OCI-LY7 (cell line): ENCODE measurements at regions of chr15 and their contacts with region 1.

Region 1: GRCh38 chr15:41660235-41661077 is at the start of gene MGA:
- DNase-seq: peak; percentile 98
- H3K4me3 ChIP-seq: peak within 1 kb of the TSS; percentile 78
- H3K27ac ChIP-seq: peak within 1 kb of the TSS; percentile 95
- H3K4me1 ChIP-seq: peaks cover 44% of the 10 kb centered on the region
- CTCF ChIP-seq: no peak
- total RNA-seq, gene MGA: 48.8 and 60.1 TPM in 2 replicates

Region 2: GRCh38 chr15:41530363-41530956 is 130.0 kb before region 1 on chr15:
- CTCF ChIA-PET with region 1: no interaction called
- POLR2A ChIA-PET with region 1: no interaction called
- intact Hi-C with region 1: no loop called
- DNase-seq: peak; percentile 32
- H3K4me3 ChIP-seq: no peak overlapping the region
- H3K27ac ChIP-seq: peak overlapping the region; percentile 21
- H3K4me1 ChIP-seq: peaks cover 11% of the 10 kb centered on the region
- CTCF ChIP-seq: no peak

Region 3: DNA sequence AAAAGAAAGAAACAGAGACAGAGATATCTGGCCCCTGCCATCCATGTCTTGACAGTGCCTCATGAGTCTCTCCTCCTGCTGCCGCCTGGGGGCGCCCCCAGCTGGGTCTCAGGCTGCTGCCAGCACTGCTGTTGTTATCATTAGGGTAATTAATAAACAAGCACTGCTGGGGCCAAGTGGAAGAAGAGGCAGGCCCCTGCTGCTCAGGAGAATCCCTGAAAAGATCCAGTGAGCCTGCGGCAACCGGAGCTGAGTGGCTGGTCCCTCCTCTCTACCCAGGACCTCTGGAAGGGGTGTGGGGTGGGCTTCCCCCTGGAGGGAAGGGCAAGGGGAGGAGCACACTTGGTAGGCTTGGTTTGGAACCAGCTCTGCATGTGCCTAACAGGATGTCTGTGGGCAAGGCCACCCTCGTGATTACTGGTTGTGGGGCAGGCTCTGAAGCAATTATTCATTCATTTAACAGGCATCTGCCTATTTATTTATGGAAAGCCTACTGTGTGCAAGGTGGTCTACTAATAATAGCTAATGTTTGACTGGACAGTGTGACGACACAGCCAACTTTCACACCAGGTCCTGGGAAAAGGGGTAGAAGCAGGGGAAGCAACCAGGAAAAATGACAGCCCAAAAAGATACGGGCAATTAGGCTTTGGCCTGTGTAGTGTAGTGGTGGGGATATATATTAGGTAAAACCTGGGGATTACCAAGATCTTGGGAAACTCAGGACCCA is 102.6 kb before region 1 on chr15:
- CTCF ChIA-PET with region 1: no interaction called
- POLR2A ChIA-PET with region 1: no interaction called
- intact Hi-C with region 1: loop called (anchors 2 kb)
- DNase-seq: peak; percentile 77
- H3K4me3 ChIP-seq: peak overlapping the region; percentile 50
- H3K27ac ChIP-seq: no peak overlapping the region
- H3K4me1 ChIP-seq: peaks cover 30% of the 10 kb centered on the region
- CTCF ChIP-seq: peak; percentile 99

Region 4: GRCh38 chr15:41585127-41586047 is 75.1 kb before region 1 on chr15:
- CTCF ChIA-PET with region 1: no interaction called
- POLR2A ChIA-PET with region 1: no interaction called
- intact Hi-C with region 1: no loop called
- DNase-seq: no peak
- H3K4me3 ChIP-seq: no peak overlapping the region
- H3K27ac ChIP-seq: no peak overlapping the region
- H3K4me1 ChIP-seq: no peaks in the 10 kb centered on the region
- CTCF ChIP-seq: no peak

Region 5: DNA sequence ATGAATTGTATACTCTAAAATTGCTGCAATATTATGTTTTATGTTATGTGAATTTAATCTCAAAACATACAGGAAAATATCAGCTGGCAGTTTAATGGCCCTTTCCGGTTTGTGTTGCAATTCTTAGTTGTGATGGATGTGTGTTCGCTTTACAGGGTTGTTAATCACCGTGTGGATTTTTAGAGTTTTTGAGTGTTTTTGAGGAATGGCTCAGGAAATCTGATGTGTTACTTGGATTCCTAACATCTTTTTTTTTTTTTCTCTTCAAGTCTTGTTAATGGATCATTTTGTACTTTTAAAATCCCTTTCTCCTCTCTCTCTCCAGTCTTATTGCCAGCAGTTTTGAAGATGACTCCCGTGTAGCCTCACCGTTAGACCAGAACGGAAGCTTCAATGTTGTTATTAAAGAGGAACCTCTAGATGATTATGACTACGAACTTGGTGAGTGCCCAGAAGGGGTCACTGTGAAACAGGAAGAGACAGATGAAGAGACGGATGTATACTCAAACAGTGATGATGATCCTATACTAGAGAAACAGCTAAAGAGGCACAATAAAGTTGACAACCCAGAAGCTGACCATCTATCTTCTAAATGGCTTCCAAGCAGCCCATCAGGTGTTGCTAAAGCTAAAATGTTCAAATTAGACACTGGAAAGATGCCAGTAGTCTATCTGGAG is 35.4 kb after region 1 on chr15:
- CTCF ChIA-PET with region 1: no interaction called
- POLR2A ChIA-PET with region 1: no interaction called
- intact Hi-C with region 1: loop called (anchors 5 kb)
- DNase-seq: peak; percentile 81
- H3K4me3 ChIP-seq: peak overlapping the region; percentile 3
- H3K27ac ChIP-seq: peak overlapping the region; percentile 27
- H3K4me1 ChIP-seq: peaks cover 31% of the 10 kb centered on the region
- CTCF ChIP-seq: peak; percentile 84

Region 6: GRCh38 chr15:41713047-41713446 is 52.6 kb after region 1 on chr15:
- CTCF ChIA-PET with region 1: interaction called, 11 read pairs
- POLR2A ChIA-PET with region 1: no interaction called
- intact Hi-C with region 1: no loop called
- DNase-seq: no peak
- H3K4me3 ChIP-seq: no peak overlapping the region
- H3K27ac ChIP-seq: no peak overlapping the region
- H3K4me1 ChIP-seq: no peaks in the 10 kb centered on the region
- CTCF ChIP-seq: no peak

Region 7: DNA sequence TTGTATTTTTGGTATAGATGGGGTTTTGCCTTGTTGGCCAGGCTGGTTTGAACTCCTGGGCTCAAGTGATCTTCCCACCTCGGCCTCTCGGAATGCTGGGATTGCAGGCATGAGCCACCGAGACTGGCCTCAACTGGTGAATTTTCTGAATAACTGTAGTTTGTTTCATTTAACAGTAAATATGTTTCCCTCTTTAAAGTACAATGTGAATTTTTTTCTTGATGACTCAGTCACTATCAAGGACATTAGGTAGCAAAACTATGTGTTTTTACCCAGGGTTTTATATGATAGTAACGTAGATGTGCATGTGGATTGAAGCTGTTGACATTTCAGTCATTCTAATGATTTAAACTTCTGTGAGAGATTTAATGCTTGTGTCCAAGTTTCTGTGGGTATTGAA is 73.6 kb after region 1 on chr15:
- CTCF ChIA-PET with region 1: no interaction called
- POLR2A ChIA-PET with region 1: no interaction called
- intact Hi-C with region 1: no loop called
- DNase-seq: no peak
- H3K4me3 ChIP-seq: no peak overlapping the region
- H3K27ac ChIP-seq: no peak overlapping the region
- H3K4me1 ChIP-seq: peaks cover 10% of the 10 kb centered on the region
- CTCF ChIP-seq: no peak

Region 8: GRCh38 chr15:41881920-41882688 is 221.6 kb after region 1 on chr15:
- CTCF ChIA-PET with region 1: no interaction called
- POLR2A ChIA-PET with region 1: no interaction called
- intact Hi-C with region 1: no loop called
- DNase-seq: no peak
- H3K4me3 ChIP-seq: no peak overlapping the region
- H3K27ac ChIP-seq: no peak overlapping the region
- H3K4me1 ChIP-seq: no peaks in the 10 kb centered on the region
- CTCF ChIP-seq: no peak